Heart left ventricle (tissue), 16 donors: ENCODE measurements at regions of chr3 and their contacts with region 1.

Region 1: GRCh38 chr3:141271279-141272030 is 39.8 kb downstream of the PXYLP1 start:
- DNase-seq: no peak
- ATAC-seq: no peak
- H3K4me3 ChIP-seq: no peak overlapping the region
- H3K27ac ChIP-seq: no peak overlapping the region
- H3K4me1 ChIP-seq: peaks cover 0 to 23% (median 6%) of the 10 kb centered on the region in 12 donors
- H3K27me3 ChIP-seq: no peaks in the 10 kb centered on the region
- CTCF ChIP-seq: no peak
- POLR2A ChIP-seq: no peak

Region 2: GRCh38 chr3:141253811-141254210 is 17.6 kb before region 1 on chr3:
- intact Hi-C with region 1: loop called in 1 of 10 experiments (anchors 1 kb)
- DNase-seq: peak in 1 of 5 donors; percentile 3
- ATAC-seq: no peak
- H3K4me3 ChIP-seq: no peak overlapping the region
- H3K27ac ChIP-seq: no peak overlapping the region
- H3K4me1 ChIP-seq: peaks cover 0 to 42% (median 9%) of the 10 kb centered on the region in 12 donors
- H3K27me3 ChIP-seq: no peaks in the 10 kb centered on the region
- CTCF ChIP-seq: no peak
- POLR2A ChIP-seq: no peak

Region 3: DNA sequence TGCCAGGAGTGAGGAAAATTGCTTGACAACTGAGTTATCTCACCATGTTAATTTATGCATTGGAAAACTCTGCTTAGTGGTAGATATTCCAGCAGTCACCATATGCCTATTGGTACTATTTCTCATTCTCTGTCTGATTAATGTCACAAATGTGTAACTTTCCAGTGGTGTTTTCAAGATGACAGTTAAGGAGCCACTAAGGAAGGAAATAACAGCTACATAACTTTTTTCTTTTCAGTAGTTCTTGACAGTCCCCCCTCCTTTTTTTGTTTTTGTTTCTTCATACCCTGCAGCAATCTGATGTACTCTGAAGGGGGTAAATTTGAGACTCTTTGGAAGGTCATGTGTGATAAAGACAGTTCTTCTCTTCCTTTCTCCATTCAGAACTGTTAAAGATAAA is 228.5 kb after region 1 on chr3:
- intact Hi-C with region 1: no loop called
- DNase-seq: no peak
- ATAC-seq: no peak
- H3K4me3 ChIP-seq: no peak overlapping the region
- H3K27ac ChIP-seq: peak overlapping the region in 1 of 12 donors; percentile 84
- H3K4me1 ChIP-seq: peaks cover 0 to 56% (median 10%) of the 10 kb centered on the region in 12 donors
- H3K27me3 ChIP-seq: no peaks in the 10 kb centered on the region
- CTCF ChIP-seq: no peak
- POLR2A ChIP-seq: no peak